Right ventricle myocardium superior (tissue), 1 donor: ENCODE measurements at regions of chr1 and their contacts with region 1.

Region 1: DNA sequence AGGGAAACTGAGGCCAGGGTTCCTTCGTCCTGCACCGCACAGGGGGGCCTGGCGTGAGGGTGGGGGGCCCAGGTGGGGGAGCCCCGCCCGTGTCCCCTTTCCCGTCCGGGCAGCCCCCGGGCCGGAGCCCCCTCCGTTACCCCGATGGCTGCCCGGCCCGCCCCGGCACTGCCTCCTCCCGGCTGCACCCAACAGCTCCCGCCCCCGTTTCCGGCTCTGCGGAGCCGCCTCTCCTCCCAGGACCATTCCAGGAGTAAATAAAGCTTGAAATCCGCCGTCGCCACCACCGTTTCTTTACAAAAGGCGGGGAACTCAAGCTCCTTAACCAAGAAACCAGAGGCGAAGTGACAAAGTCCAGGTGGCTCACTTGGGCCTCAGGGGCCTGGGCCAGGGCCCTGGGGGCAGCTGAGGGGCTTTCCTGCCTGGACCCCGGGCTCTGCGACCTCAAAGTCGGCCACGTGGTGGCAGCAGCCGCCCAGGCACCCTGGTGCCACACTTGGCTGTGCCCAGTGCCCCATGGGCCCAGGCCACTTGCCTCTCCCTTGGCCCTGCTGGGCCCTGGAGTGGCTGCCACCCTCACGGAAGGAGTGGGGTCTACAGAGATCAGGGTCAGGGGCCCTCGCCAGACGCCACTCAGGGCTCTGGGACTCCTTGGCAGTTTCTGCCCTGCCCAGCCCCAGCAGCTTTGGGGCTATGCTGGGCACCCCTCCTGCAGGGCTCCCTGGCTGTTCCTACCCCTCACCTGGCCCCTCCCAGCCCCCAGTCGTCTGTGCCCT is 514 bp upstream of the FAAP20 start:
- DNase-seq: peak; percentile 94
- ATAC-seq: peak; percentile 83

Region 2: GRCh38 chr1:2381741-2382620 is 186.9 kb after region 1 on chr1:
- intact Hi-C with region 1: loop called (anchors 2 kb)
- DNase-seq: peak; percentile 90
- ATAC-seq: peak; percentile 97